PC-3 (cell line): ENCODE measurements at regions of chr11 and their contacts with region 1.

Region 1: GRCh38 chr11:8911029-8911826 is at the start of gene AKIP1:
- DNase-seq: peak; percentile 91
- ATAC-seq: peak; percentile 83
- H3K4me3 ChIP-seq: peak within 1 kb of the TSS; percentile 99
- H3K27ac ChIP-seq: no peak within 1 kb of the TSS
- H3K4me1 ChIP-seq: peaks cover 23% of the 10 kb centered on the region
- H3K27me3 ChIP-seq: no peaks in the 10 kb centered on the region
- CTCF ChIP-seq: no peak
- total RNA-seq, gene AKIP1: 25.3 and 29.5 TPM in 2 replicates

Region 2: GRCh38 chr11:8813658-8814057 is 97.6 kb before region 1 on chr11:
- CTCF ChIA-PET with region 1: no interaction called
- POLR2A ChIA-PET with region 1: interaction called, 3 read pairs
- intact Hi-C with region 1: loop called (anchors 2 kb)
- DNase-seq: peak; percentile 79
- ATAC-seq: peak; percentile 58
- H3K4me3 ChIP-seq: no peak overlapping the region
- H3K27ac ChIP-seq: peak overlapping the region; percentile 53
- H3K4me1 ChIP-seq: peaks cover 30% of the 10 kb centered on the region
- H3K27me3 ChIP-seq: no peaks in the 10 kb centered on the region
- CTCF ChIP-seq: peak; percentile 88

Region 3: DNA sequence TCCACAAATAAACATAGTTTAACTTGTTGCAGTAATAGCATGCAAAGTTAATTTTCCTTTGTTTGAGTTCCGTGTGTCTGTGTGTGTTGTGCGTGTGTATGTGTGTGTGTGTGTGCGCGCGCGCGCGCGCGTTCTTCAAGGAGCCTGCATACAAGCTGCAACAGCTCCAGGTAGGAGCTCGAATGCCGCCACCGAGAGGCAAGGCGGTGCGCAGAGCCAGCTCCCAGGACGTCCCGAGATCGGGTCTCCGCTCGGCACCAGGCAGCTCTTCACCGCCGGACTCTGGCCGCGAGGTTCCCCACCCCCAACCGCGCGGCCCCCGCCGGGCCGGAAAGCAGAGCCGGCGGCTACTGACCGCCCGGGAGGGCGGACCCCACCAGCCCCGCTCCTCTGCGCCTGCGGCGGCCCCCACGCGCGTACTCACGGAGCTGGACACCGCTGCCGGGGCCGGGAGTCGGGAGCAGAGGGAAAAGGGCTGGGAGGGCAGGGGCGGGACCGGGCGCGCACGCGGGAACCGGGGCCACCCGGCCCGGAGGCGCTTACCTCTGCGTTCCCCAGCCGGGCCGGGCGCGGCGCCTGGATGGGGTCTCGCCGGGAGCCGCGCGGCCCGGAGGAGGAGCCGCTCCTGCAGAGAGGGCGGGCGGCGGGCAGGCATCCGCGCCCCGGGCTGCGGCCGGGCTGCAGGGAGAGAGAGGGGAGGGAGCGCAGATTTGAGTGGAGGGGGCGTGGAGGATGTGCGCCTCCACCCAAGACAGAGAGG is 40.6 kb before region 1 on chr11:
- CTCF ChIA-PET with region 1: no interaction called
- POLR2A ChIA-PET with region 1: no interaction called
- intact Hi-C with region 1: loop called (anchors 5 kb)
- DNase-seq: peak; percentile 54
- ATAC-seq: peak; percentile 79
- H3K4me3 ChIP-seq: peak overlapping the region; percentile 81
- H3K27ac ChIP-seq: no peak overlapping the region
- H3K4me1 ChIP-seq: no peaks in the 10 kb centered on the region
- H3K27me3 ChIP-seq: no peaks in the 10 kb centered on the region
- CTCF ChIP-seq: 0 out of 2 replicates have a peak, but pooled peaks have one; percentile 15

Region 4: DNA sequence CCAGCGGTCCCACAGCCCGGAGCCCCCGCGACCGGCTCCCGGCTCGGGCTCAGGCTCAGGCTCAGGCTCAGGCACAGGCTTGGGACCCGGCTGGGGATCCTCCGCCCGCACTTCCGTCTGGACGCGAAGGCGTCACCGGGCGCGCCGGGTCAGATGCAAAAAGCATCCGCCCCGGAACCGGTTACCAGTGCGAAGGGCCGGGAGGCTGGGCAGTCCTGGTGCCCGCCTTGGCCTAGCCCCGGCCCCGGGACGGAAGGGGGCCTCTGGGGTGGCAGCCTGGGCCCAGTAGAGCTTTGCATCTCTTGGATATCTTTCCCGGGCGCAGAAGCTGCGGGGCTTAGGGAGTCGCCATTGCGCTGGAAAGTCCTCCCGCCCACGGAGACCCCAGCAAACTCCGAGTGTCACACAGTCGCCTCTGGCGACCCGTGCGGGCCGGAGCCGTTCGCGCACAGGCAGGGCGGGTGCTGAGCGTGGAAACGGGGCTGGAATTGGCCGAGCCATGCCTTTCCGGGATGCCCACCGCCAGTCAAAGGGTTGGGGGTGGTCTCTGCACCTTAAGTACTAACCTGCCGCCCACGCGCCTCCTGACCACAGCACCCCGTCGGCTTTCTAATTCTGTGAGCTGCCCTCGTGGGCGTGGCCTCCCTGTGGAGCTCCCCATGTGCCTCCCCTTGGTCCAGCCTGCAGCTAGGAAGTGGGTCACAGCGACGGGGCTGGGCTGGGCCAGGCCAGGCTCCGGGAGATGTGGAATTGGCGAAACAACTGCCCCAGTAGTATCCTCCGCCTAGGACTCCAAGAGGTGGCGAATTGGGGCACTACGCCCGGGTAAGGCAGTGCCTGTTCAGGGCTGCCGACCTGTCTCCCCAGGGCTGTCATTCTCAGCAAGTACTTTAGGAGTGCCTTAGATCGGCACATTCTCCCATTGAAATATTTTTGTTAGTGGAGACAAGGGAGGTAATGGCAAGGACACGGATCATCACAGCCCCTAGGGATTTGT is 53.4 kb after region 1 on chr11 and contains the start of gene TMEM9B:
- CTCF ChIA-PET with region 1: interaction called, 7 read pairs
- POLR2A ChIA-PET with region 1: interaction called, 3 read pairs
- intact Hi-C with region 1: loop called (anchors 1 kb)
- DNase-seq: peak; percentile 90
- ATAC-seq: peak; percentile 87
- H3K4me3 ChIP-seq: peak within 1 kb of the TSS; percentile 93
- H3K27ac ChIP-seq: peak within 1 kb of the TSS; percentile 89
- H3K4me1 ChIP-seq: peaks cover 25% of the 10 kb centered on the region
- H3K27me3 ChIP-seq: no peaks in the 10 kb centered on the region
- CTCF ChIP-seq: no peak
- total RNA-seq, gene TMEM9B: 32.0 and 42.1 TPM in 2 replicates

Region 5: GRCh38 chr11:9137293-9138132 is 226.3 kb after region 1 on chr11:
- CTCF ChIA-PET with region 1: interaction called, 3 read pairs
- POLR2A ChIA-PET with region 1: no interaction called
- intact Hi-C with region 1: loop called (anchors 5 kb)
- DNase-seq: peak; percentile 72
- ATAC-seq: peak; percentile 64
- H3K4me3 ChIP-seq: no peak overlapping the region
- H3K27ac ChIP-seq: no peak overlapping the region
- H3K4me1 ChIP-seq: peaks cover 27% of the 10 kb centered on the region
- H3K27me3 ChIP-seq: no peaks in the 10 kb centered on the region
- CTCF ChIP-seq: peak; percentile 94

Region 6: GRCh38 chr11:9265211-9266131 is 354.2 kb after region 1 on chr11 and contains the start of gene DENND5A:
- CTCF ChIA-PET with region 1: interaction called, 13 read pairs
- POLR2A ChIA-PET with region 1: no interaction called
- intact Hi-C with region 1: no loop called
- DNase-seq: peak; percentile 75
- ATAC-seq: peak; percentile 78
- H3K4me3 ChIP-seq: peak within 1 kb of the TSS; percentile 80
- H3K27ac ChIP-seq: no peak within 1 kb of the TSS
- H3K4me1 ChIP-seq: no peaks in the 10 kb centered on the region; the same call in 1 of the 2 replicates
- H3K27me3 ChIP-seq: no peaks in the 10 kb centered on the region
- CTCF ChIP-seq: no peak
- total RNA-seq, gene DENND5A: 37.7 and 46.9 TPM in 2 replicates